Transverse colon (tissue), 4 donors: ENCODE measurements at regions of chr3 and their contacts with region 1.

Region 1: DNA sequence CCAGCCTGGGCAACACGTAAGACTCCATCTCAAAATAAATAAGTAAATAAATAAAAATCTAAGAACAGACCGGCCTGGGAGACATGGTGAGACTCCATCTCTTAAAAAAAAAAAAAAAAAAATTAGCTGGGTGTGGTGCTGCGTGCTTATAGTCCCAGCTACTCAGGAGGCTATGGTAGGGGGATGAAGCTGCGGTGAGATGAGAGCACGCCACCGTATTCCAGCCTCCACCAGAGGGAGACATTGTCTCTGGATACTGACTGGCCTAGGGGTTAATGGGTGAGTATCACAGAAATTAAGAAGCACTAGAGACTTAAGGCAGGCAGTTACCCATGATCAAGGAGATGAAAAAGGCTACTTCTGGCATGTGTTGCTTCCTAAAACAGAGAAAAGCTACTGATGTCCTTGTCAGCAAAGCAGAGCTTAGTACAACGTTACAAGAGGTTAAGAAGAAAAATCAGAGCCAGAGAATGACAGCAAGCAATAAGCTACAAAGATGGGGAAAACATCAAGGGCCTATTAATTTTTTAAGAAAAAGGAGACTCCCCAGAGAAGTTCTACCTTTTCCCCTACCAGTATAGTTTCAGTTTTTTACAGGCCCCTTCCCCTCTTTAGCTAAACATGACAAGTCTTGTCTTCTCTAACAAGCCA is 8.6 kb downstream of the TFRC start:
- DNase-seq: peak; percentile 70
- H3K4me3 ChIP-seq: no peak overlapping the region
- H3K27ac ChIP-seq: no peak overlapping the region
- H3K4me1 ChIP-seq: peaks cover 0 to 7% (median 3%) of the 10 kb centered on the region in 4 donors
- H3K27me3 ChIP-seq: no peaks in the 10 kb centered on the region
- CTCF ChIP-seq: peak; percentile 66 to 84 (median 71)
- EP300 ChIP-seq: no peak
- POLR2A ChIP-seq: no peak

Region 2: DNA sequence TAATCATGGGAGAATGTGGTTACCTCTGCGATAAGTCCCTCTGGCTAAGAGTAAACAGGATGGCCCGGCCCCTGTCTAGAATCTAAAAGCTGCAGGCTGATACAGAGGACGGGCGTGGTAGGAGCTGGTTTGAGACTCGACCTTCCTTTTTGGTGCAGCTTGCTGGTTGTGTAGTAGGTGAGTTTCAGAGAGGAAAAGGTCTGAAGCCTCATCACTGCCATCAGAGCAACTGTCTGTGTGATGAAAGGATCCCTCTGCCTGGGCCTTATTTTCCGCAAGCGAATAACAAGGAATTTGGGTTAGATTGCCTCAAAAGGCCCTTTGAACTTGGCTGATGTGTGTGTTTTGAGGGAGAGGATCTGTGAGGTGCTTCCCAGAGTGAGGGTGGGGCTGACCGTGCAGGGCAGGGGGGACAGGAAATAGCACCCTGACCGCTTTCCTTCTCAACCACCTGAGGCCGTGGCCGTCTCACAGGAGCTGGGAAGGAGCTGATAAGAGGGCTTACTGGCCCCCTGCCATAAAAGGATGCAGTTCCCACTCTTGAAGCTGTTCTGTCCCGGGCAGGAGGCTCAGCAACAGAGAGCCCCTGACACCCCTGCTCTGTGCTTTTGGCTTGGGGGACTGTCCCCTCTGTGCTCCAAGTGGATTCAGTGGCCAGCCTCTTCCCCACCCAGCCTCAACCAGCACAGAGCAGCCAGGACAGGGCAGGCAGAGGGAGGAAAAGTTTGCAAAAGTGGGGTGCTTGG is 54.2 kb after region 1 on chr3:
- in situ Hi-C with region 1: no loop called
- intact Hi-C with region 1: no loop called
- DNase-seq: peak; percentile 34
- H3K4me3 ChIP-seq: no peak overlapping the region
- H3K27ac ChIP-seq: no peak overlapping the region
- H3K4me1 ChIP-seq: peaks cover 0 to 11% (median 4%) of the 10 kb centered on the region in 4 donors
- H3K27me3 ChIP-seq: no peaks in the 10 kb centered on the region
- CTCF ChIP-seq: no peak
- EP300 ChIP-seq: no peak
- POLR2A ChIP-seq: no peak

Region 3: DNA sequence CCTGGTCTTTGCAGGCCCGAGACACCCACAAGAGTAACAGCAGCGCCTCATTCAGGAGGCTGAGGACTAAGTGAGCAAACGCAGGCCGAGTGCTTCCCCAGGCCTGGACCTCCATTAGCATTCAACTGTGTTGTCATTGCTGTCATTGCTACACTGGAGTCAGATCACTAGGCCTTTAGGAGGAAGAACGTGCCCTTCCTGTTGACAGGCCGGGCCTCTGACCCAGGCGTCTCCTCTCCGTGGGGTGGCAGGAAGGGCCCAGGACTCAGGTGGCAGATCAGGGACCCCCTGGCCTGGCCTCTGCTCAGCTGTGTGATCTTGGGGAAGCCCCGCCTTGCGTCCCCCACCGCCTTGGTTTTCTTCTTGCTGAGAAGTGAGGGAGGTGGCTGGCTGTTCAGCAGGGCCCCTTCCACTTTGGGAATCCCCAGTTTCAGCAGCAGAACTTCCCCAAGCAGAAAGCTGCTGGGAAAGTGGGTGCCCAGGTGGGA is 118.8 kb after region 1 on chr3:
- in situ Hi-C with region 1: loop called (anchors 5 to 10 kb)
- intact Hi-C with region 1: loop called (anchors 5 kb)
- DNase-seq: no peak
- H3K4me3 ChIP-seq: no peak overlapping the region
- H3K27ac ChIP-seq: peak overlapping the region; percentile 67 to 87 (median 76)
- H3K4me1 ChIP-seq: peaks cover 11 to 58% (median 32%) of the 10 kb centered on the region in 4 donors
- H3K27me3 ChIP-seq: no peaks in the 10 kb centered on the region
- CTCF ChIP-seq: no peak
- EP300 ChIP-seq: no peak
- POLR2A ChIP-seq: no peak

Region 4: GRCh38 chr3:196198771-196199753 is 125.7 kb after region 1 on chr3:
- in situ Hi-C with region 1: loop called in 2 of 4 experiments (anchors 5 to 10 kb)
- intact Hi-C with region 1: loop called (anchors 5 kb)
- DNase-seq: no peak
- H3K4me3 ChIP-seq: no peak overlapping the region
- H3K27ac ChIP-seq: no peak overlapping the region
- H3K4me1 ChIP-seq: peaks cover 5 to 20% (median 12%) of the 10 kb centered on the region in 4 donors
- H3K27me3 ChIP-seq: no peaks in the 10 kb centered on the region
- CTCF ChIP-seq: peak in 1 of 5 experiments; percentile 21
- EP300 ChIP-seq: no peak
- POLR2A ChIP-seq: no peak

Region 5: DNA sequence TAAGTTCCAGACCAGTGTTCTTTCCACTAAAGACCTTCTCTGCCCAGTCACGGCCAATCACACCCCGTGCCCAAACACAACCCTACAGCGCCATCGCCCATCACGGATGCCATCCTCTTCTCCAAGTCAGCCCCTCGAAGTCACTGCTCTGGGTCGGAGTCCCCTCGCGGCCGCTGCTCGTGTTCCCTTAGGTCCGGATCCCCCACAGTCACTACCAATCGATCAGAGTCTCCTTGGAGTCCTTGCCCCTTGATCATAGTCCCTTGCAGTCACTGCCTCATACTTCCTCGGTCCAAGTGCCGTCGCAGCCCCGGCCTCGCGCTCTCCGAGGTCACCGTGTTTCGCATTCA is 213.8 kb after region 1 on chr3:
- in situ Hi-C with region 1: no loop called
- intact Hi-C with region 1: no loop called
- DNase-seq: no peak
- H3K4me3 ChIP-seq: peak overlapping the region; percentile 46 to 82 (median 71)
- H3K27ac ChIP-seq: peak overlapping the region; percentile 86 to 97 (median 94)
- H3K4me1 ChIP-seq: peaks cover 12 to 37% (median 16%) of the 10 kb centered on the region in 4 donors
- H3K27me3 ChIP-seq: no peaks in the 10 kb centered on the region
- CTCF ChIP-seq: no peak
- EP300 ChIP-seq: no peak
- POLR2A ChIP-seq: no peak